B cell (primary cell): ENCODE measurements at regions of chr19 and their contacts with region 1.

Region 1: GRCh38 chr19:6021878-6022569 is 44.1 kb upstream of the RANBP3 start:
- DNase-seq: peak; percentile 72
- ATAC-seq: peak; percentile 82
- H3K4me3 ChIP-seq: no peak overlapping the region
- H3K4me3 Mint-ChIP-seq: no peak overlapping the region
- H3K27ac ChIP-seq: no peak overlapping the region
- H3K27ac Mint-ChIP-seq: no peak overlapping the region
- H3K4me1 ChIP-seq: no peaks in the 10 kb centered on the region
- H3K4me1 Mint-ChIP-seq: peaks cover 2% of the 10 kb centered on the region
- H3K27me3 ChIP-seq: no peaks in the 10 kb centered on the region
- H3K27me3 Mint-ChIP-seq: no peaks in the 10 kb centered on the region
- CTCF ChIP-seq: peak; percentile 74

Region 2: GRCh38 chr19:5695288-5696195 is 326.5 kb before region 1 on chr19:
- CTCF ChIA-PET with region 1: no interaction called
- POLR2A ChIA-PET with region 1: interaction called, 10 read pairs
- intact Hi-C with region 1: no loop called
- DNase-seq: no peak
- ATAC-seq: no peak
- H3K4me3 ChIP-seq: no peak overlapping the region
- H3K4me3 Mint-ChIP-seq: no peak overlapping the region
- H3K27ac ChIP-seq: no peak overlapping the region
- H3K27ac Mint-ChIP-seq: peak overlapping the region; percentile 20
- H3K4me1 ChIP-seq: peaks cover 3 to 17% of the 10 kb centered on the region in 2 donors
- H3K4me1 Mint-ChIP-seq: peaks cover 24% of the 10 kb centered on the region
- H3K27me3 ChIP-seq: no peaks in the 10 kb centered on the region
- H3K27me3 Mint-ChIP-seq: no peaks in the 10 kb centered on the region
- CTCF ChIP-seq: no peak

Region 3: GRCh38 chr19:5803752-5804515 is 218.1 kb before region 1 on chr19:
- CTCF ChIA-PET with region 1: interaction called, 12 read pairs
- POLR2A ChIA-PET with region 1: interaction called, 5 read pairs
- intact Hi-C with region 1: loop called (anchors 2 kb)
- DNase-seq: peak; percentile 92
- ATAC-seq: peak; percentile 91
- H3K4me3 ChIP-seq: peak overlapping the region in 4 of 5 experiments; percentile 7 to 55 (median 42)
- H3K4me3 Mint-ChIP-seq: peak overlapping the region; percentile 76
- H3K27ac ChIP-seq: peak overlapping the region in 1 of 2 donors; percentile 53
- H3K27ac Mint-ChIP-seq: peak overlapping the region; percentile 50
- H3K4me1 ChIP-seq: peaks cover 20 to 27% of the 10 kb centered on the region in 2 donors
- H3K4me1 Mint-ChIP-seq: peaks cover 22% of the 10 kb centered on the region
- H3K27me3 ChIP-seq: peaks cover 0 to 66% (median 29%) of the 10 kb centered on the region in 4 experiments
- H3K27me3 Mint-ChIP-seq: peaks cover 26% of the 10 kb centered on the region
- CTCF ChIP-seq: peak; percentile 85

Region 4: GRCh38 chr19:5987077-5987818 is 34.8 kb before region 1 on chr19:
- CTCF ChIA-PET with region 1: interaction called, 35 read pairs
- POLR2A ChIA-PET with region 1: interaction called, 9 read pairs
- intact Hi-C with region 1: loop called (anchors 1 kb)
- DNase-seq: peak; percentile 79
- ATAC-seq: peak; percentile 65
- H3K4me3 ChIP-seq: peak overlapping the region; percentile 36 to 66 (median 48)
- H3K4me3 Mint-ChIP-seq: peak overlapping the region; percentile 82
- H3K27ac ChIP-seq: no peak overlapping the region
- H3K27ac Mint-ChIP-seq: no peak overlapping the region
- H3K4me1 ChIP-seq: peaks cover 0 to 18% of the 10 kb centered on the region in 2 donors
- H3K4me1 Mint-ChIP-seq: peaks cover 20% of the 10 kb centered on the region
- H3K27me3 ChIP-seq: no peaks in the 10 kb centered on the region
- H3K27me3 Mint-ChIP-seq: no peaks in the 10 kb centered on the region
- CTCF ChIP-seq: peak; percentile 97